ENCODE measurements at regions of chr11 and their contacts with region 1.

Region 1: DNA sequence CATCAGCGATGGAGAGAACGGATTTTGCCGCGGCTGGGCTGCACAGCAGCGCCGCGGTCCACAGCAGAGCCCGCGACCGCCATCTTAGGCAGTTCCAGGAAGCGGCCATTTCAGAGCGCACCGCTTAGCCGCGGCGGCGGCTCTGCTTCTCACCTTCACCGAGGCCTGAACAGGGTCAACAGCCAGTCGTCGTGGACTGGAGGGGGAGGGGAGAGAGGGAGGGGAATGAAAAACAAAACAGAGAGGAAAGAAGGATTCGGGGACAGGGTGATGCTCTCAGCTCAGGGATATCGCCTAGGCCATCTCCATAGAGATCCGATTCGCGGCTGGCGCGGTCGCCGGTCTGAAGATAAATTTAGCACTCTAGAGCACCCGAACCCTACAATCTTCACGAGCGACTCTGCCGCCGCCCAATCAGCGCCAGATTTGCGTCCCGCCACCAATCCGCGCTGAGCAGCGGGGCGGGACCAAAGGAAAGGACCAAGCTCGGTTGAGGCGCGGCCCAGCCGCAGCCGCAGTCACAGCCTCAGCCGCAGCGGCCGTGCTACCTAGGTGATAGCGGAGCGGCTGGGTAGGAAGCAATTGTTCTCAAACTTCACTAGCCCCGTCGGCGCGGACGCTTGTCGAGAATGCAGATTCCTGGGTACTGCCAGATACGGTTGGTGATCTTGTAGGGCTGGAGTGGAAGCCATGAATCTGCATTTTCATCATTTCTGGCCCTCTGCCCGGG is at the start of gene ZBED5:
- DNase-seq: peak; percentile 90 to 98 (median 94)
- ATAC-seq: peak; percentile 89
- H3K4me3 ChIP-seq: peak within 1 kb of the TSS; percentile 87
- H3K4me3 Mint-ChIP-seq: peak within 1 kb of the TSS; percentile 100
- H3K27ac ChIP-seq: peak within 1 kb of the TSS; percentile 92 to 96
- H3K27ac Mint-ChIP-seq: peak within 1 kb of the TSS; percentile 99
- H3K4me1 ChIP-seq: peaks cover 18% of the 10 kb centered on the region
- H3K4me1 Mint-ChIP-seq: peaks cover 66% of the 10 kb centered on the region
- H3K27me3 ChIP-seq: no peaks in the 10 kb centered on the region
- H3K27me3 Mint-ChIP-seq: no peaks in the 10 kb centered on the region
- CTCF ChIP-seq: no peak
- total RNA-seq, gene ZBED5: 71.1 to 72.0 TPM

Region 2: DNA sequence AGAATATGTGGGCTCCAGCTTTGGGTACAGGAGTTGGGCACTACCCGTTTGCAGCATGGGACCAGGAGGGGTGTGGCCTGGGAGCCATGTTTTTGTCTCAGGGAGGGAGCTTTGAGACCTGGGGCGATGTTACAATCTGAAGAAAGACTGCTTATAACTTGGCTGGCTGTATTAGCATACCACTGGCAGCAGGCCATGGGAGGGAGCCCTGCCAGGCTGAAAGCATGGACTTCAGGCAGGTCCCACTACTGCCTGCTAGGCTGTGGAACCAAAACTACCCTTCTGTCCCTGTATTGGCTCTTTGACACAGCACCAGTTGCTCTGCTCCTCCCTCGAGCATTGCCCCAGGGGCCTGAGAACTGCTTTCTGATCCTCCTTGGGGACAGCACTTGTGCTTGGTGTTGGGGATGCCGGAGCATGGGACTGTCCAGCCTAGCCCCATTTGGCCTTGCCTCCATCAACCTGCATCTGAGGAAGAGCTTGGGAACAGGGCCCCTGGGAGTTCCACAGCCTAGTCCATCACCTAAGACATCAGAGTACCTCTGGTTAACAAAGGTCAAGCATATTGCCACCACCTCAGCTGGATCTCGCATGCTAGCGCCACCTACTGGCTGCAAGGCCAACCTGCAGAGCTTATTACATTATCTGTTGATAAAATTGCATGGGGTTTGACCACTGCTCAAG is 781.3 kb before region 1 on chr11:
- CTCF ChIA-PET with region 1: no interaction called
- POLR2A ChIA-PET with region 1: no interaction called
- intact Hi-C with region 1: no loop called
- DNase-seq: peak in 4 of 14 experiments; percentile 10 to 34 (median 32)
- ATAC-seq: no peak
- H3K4me3 ChIP-seq: no peak overlapping the region
- H3K4me3 Mint-ChIP-seq: no peak overlapping the region
- H3K27ac ChIP-seq: no peak overlapping the region
- H3K27ac Mint-ChIP-seq: no peak overlapping the region
- H3K4me1 ChIP-seq: no peaks in the 10 kb centered on the region
- H3K4me1 Mint-ChIP-seq: no peaks in the 10 kb centered on the region
- H3K27me3 ChIP-seq: no peaks in the 10 kb centered on the region
- H3K27me3 Mint-ChIP-seq: no peaks in the 10 kb centered on the region
- CTCF ChIP-seq: peak; percentile 39

Region 3: GRCh38 chr11:10750838-10751580 is 106.9 kb before region 1 on chr11 and contains the start of gene CTR9:
- CTCF ChIA-PET with region 1: no interaction called
- POLR2A ChIA-PET with region 1: interaction called, 19 read pairs
- intact Hi-C with region 1: loop called in 1 of 2 experiments (anchors 5 kb)
- DNase-seq: peak; percentile 82 to 96 (median 90)
- ATAC-seq: peak; percentile 86
- H3K4me3 ChIP-seq: peak within 1 kb of the TSS; percentile 95
- H3K4me3 Mint-ChIP-seq: peak within 1 kb of the TSS; percentile 97
- H3K27ac ChIP-seq: peak within 1 kb of the TSS; percentile 83 to 84
- H3K27ac Mint-ChIP-seq: peak within 1 kb of the TSS; percentile 93
- H3K4me1 ChIP-seq: peaks cover 14% of the 10 kb centered on the region
- H3K4me1 Mint-ChIP-seq: peaks cover 35% of the 10 kb centered on the region
- H3K27me3 ChIP-seq: no peaks in the 10 kb centered on the region
- H3K27me3 Mint-ChIP-seq: no peaks in the 10 kb centered on the region
- CTCF ChIP-seq: no peak
- total RNA-seq, gene CTR9: 34.0 to 34.7 TPM

Region 4: GRCh38 chr11:10797531-10797930 is 60.3 kb before region 1 on chr11:
- CTCF ChIA-PET with region 1: interaction called, 6 read pairs
- POLR2A ChIA-PET with region 1: interaction called, 34 read pairs
- intact Hi-C with region 1: no loop called
- DNase-seq: no peak
- ATAC-seq: no peak
- H3K4me3 ChIP-seq: no peak overlapping the region
- H3K4me3 Mint-ChIP-seq: no peak overlapping the region
- H3K27ac ChIP-seq: no peak overlapping the region
- H3K27ac Mint-ChIP-seq: peak overlapping the region; percentile 45
- H3K4me1 ChIP-seq: peaks cover 43% of the 10 kb centered on the region
- H3K4me1 Mint-ChIP-seq: peaks cover 76% of the 10 kb centered on the region
- H3K27me3 ChIP-seq: no peaks in the 10 kb centered on the region
- H3K27me3 Mint-ChIP-seq: no peaks in the 10 kb centered on the region
- CTCF ChIP-seq: no peak

Region 5: DNA sequence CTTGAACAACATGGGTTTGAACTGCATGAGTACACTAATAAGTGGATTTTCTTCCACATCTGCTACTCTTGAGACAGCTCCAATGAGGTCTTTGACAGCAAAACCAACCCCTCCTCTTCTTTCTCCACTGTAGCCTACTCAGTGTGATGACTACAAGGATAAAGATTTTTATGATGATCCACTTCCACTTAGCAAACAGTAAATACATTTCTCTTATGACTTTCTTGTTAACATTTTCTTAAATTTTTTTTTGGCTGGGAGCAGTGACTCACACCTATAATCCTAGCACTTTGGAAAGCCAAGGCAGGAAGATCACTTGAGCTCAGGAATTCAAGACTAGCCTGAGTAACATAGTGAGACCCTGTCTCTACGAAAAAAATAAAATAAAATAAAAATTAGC is 39.3 kb before region 1 on chr11:
- CTCF ChIA-PET with region 1: no interaction called
- POLR2A ChIA-PET with region 1: interaction called, 10 read pairs
- intact Hi-C with region 1: no loop called
- DNase-seq: no peak
- ATAC-seq: no peak
- H3K4me3 ChIP-seq: no peak overlapping the region
- H3K4me3 Mint-ChIP-seq: no peak overlapping the region
- H3K27ac ChIP-seq: no peak overlapping the region
- H3K27ac Mint-ChIP-seq: no peak overlapping the region
- H3K4me1 ChIP-seq: no peaks in the 10 kb centered on the region
- H3K4me1 Mint-ChIP-seq: no peaks in the 10 kb centered on the region
- H3K27me3 ChIP-seq: no peaks in the 10 kb centered on the region
- H3K27me3 Mint-ChIP-seq: no peaks in the 10 kb centered on the region
- CTCF ChIP-seq: no peak

Region 6: GRCh38 chr11:10878408-10879214 is 20.7 kb after region 1 on chr11:
- CTCF ChIA-PET with region 1: interaction called, 24 read pairs
- POLR2A ChIA-PET with region 1: interaction called, 16 read pairs
- intact Hi-C with region 1: loop called in 1 of 2 experiments (anchors 2 kb)
- DNase-seq: peak in 4 of 14 experiments; percentile 44 to 83 (median 78)
- ATAC-seq: peak; percentile 87
- H3K4me3 ChIP-seq: no peak overlapping the region
- H3K4me3 Mint-ChIP-seq: no peak overlapping the region
- H3K27ac ChIP-seq: no peak overlapping the region
- H3K27ac Mint-ChIP-seq: no peak overlapping the region
- H3K4me1 ChIP-seq: peaks cover 7% of the 10 kb centered on the region
- H3K4me1 Mint-ChIP-seq: peaks cover 10% of the 10 kb centered on the region
- H3K27me3 ChIP-seq: no peaks in the 10 kb centered on the region
- H3K27me3 Mint-ChIP-seq: no peaks in the 10 kb centered on the region
- CTCF ChIP-seq: peak; percentile 77

Region 7: GRCh38 chr11:10933455-10934292 is 75.8 kb after region 1 on chr11:
- CTCF ChIA-PET with region 1: no interaction called
- POLR2A ChIA-PET with region 1: interaction called, 15 read pairs
- intact Hi-C with region 1: no loop called
- DNase-seq: peak; percentile 67 to 90 (median 80)
- ATAC-seq: peak; percentile 89
- H3K4me3 ChIP-seq: peak overlapping the region; percentile 56
- H3K4me3 Mint-ChIP-seq: peak overlapping the region; percentile 90
- H3K27ac ChIP-seq: no peak overlapping the region
- H3K27ac Mint-ChIP-seq: peak overlapping the region; percentile 52
- H3K4me1 ChIP-seq: peaks cover 24% of the 10 kb centered on the region
- H3K4me1 Mint-ChIP-seq: peaks cover 24% of the 10 kb centered on the region
- H3K27me3 ChIP-seq: peaks cover 25 to 31% of the 10 kb centered on the region in 2 experiments
- H3K27me3 Mint-ChIP-seq: peaks cover 49% of the 10 kb centered on the region
- CTCF ChIP-seq: peak; percentile 94